Activated CD4-positive, alpha-beta memory T cell treated with anti-CD3 and anti-CD28 coated beads for 36 hours (primary cell): ENCODE measurements at regions of chr9 and their contacts with region 1.

Region 1: DNA sequence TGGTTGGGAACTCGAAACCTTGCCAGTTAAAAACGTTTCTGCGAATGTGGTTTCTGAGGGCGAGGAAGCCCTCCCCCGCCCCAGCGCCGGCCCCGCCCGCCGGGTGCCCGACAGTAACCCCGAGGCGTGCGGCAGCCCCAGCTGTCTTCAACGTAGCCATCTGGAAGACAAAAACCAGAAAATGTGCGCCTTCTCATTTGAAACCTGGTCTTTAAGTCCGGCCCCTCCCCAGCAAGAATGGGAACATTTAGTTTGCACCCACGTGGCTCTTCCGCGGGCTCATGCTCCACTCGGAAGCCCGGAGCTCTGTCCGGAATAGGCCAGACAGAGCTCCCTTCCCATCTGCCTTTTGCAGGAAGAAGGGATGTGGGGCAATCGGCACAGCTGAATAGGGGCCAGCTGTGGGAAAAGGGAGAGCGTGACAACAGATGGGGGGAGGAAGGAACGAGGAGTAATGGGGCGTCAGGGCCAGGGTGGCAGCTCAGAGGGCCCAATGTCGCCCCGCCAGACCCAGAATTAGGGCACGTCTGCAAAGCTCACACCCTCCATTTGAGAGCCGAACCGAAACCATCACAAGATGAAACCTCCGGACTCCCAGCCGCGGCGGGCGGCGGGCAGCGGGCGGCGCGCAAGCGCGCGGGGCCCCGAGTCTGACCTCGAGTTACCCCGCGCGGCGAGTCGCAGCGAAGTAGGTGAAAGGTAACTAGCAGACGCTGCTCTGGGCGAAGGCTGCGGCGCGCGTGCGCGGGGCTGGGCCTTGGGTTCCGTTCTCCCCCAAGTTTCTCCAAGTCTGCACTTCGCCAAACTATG is 63.4 kb upstream of the ABCA1 start:
- DNase-seq: peak; percentile 93
- H3K4me3 Mint-ChIP-seq: peak overlapping the region; percentile 79
- H3K27ac Mint-ChIP-seq: peak overlapping the region; percentile 92
- H3K4me1 Mint-ChIP-seq: peaks cover 35% of the 10 kb centered on the region
- H3K27me3 Mint-ChIP-seq: peaks cover 29% of the 10 kb centered on the region

Region 2: GRCh38 chr9:104747558-104748358 is 243.6 kb before region 1 on chr9 and contains the start of gene NIPSNAP3A:
- CTCF ChIA-PET with region 1: no interaction called
- POLR2A ChIA-PET with region 1: no interaction called
- intact Hi-C with region 1: loop called (anchors 5 kb)
- DNase-seq: peak; percentile 90
- H3K4me3 Mint-ChIP-seq: peak within 1 kb of the TSS; percentile 96
- H3K27ac Mint-ChIP-seq: peak within 1 kb of the TSS; percentile 89
- H3K4me1 Mint-ChIP-seq: peaks cover 14% of the 10 kb centered on the region
- H3K27me3 Mint-ChIP-seq: no peaks in the 10 kb centered on the region
- total RNA-seq, gene NIPSNAP3A: 11.1 to 12.5 TPM

Region 3: GRCh38 chr9:104927912-104928740 is 63.2 kb before region 1 on chr9 and contains the start of gene ABCA1:
- CTCF ChIA-PET with region 1: interaction called, 8 read pairs
- POLR2A ChIA-PET with region 1: interaction called, 10 read pairs
- intact Hi-C with region 1: loop called (anchors 1 kb)
- DNase-seq: peak; percentile 86
- H3K4me3 Mint-ChIP-seq: peak within 1 kb of the TSS; percentile 82
- H3K27ac Mint-ChIP-seq: peak within 1 kb of the TSS; percentile 49
- H3K4me1 Mint-ChIP-seq: peaks cover 9% of the 10 kb centered on the region
- H3K27me3 Mint-ChIP-seq: peaks cover 12% of the 10 kb centered on the region
- total RNA-seq, gene ABCA1: 6.1 TPM

Region 4: DNA sequence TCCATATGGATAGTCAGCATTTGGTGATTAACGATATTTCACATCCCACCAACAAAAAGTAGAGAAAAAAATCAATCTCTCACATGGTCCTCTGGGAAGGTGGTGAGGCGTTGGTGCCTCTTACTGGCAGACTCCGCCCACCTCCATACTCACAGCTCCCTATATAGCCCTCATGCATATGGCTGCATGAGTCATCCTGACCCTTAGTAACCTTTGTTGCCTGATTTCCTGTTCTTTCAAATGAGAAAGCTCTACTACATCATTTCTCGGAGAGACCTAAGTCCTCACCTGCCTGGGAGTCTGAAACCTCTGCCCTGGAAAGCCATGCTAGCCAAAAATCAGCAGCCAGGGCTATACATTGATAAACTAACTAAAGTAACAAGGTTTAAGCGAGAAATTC is 30.1 kb before region 1 on chr9:
- CTCF ChIA-PET with region 1: no interaction called
- POLR2A ChIA-PET with region 1: interaction called, 8 read pairs
- intact Hi-C with region 1: loop called (anchors 1 kb)
- DNase-seq: peak; percentile 83
- H3K4me3 Mint-ChIP-seq: no peak overlapping the region
- H3K27ac Mint-ChIP-seq: peak overlapping the region; percentile 85
- H3K4me1 Mint-ChIP-seq: peaks cover 31% of the 10 kb centered on the region
- H3K27me3 Mint-ChIP-seq: no peaks in the 10 kb centered on the region

Region 5: DNA sequence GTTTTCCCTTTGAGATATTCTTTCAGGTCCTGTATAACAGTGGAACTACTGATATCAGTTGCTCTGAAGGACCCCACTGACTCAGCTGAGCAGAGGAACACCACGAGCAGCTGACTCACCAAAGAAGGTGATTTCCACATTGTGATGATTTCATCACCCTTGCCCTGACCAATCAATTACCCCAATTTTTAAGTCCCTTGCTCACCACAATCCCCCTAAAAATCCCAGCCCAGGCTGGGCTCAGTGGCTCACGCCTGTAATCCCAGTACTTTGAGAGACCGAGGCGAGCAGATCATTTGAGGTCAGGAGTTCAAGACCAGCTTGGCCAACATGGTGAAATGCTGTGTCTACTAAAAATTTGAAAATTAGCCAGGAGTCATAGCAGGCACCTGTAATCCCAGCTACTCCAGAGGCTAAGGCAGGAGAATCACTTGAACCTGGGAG is 61.9 kb after region 1 on chr9:
- CTCF ChIA-PET with region 1: no interaction called
- POLR2A ChIA-PET with region 1: interaction called, 7 read pairs
- intact Hi-C with region 1: loop called (anchors 1 kb)
- DNase-seq: peak; percentile 83
- H3K4me3 Mint-ChIP-seq: no peak overlapping the region
- H3K27ac Mint-ChIP-seq: peak overlapping the region; percentile 43
- H3K4me1 Mint-ChIP-seq: peaks cover 36% of the 10 kb centered on the region
- H3K27me3 Mint-ChIP-seq: no peaks in the 10 kb centered on the region

Region 6: GRCh38 chr9:105157130-105157583 is 165.8 kb after region 1 on chr9:
- CTCF ChIA-PET with region 1: interaction called, 3 read pairs
- POLR2A ChIA-PET with region 1: no interaction called
- intact Hi-C with region 1: loop called (anchors 5 kb)
- DNase-seq: peak; percentile 27
- H3K4me3 Mint-ChIP-seq: no peak overlapping the region
- H3K27ac Mint-ChIP-seq: no peak overlapping the region
- H3K4me1 Mint-ChIP-seq: peaks cover 11% of the 10 kb centered on the region
- H3K27me3 Mint-ChIP-seq: no peaks in the 10 kb centered on the region

Region 7: DNA sequence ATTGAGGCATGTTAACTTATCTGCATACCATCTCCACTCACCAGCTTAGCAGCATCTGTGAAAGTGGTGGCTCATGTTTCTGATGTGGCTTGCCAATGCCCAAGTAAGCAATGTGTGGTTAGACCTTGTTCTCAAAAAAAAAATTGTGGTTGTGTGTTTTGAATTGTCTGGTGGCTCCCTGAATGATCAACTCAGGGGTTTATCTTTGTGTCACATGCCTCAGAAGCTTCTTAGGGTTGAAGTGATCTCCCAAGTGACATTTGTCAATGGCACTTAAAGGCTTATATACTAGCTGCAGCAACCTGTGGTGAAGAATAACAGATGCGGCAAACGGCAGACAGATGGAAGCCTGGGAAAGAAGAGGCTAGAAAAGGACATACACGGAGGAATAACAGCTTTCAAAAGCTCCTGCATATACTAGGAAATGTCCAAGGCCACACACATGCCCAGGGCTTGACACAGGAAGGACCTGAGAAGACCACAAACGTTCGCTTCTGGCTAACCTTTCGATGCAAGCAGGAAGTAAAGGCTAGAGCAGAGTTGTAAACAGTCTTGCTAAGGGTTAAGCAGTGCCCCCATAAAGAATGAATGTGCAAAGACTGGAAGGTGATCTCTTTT is 414.3 kb after region 1 on chr9:
- CTCF ChIA-PET with region 1: no interaction called
- POLR2A ChIA-PET with region 1: no interaction called
- intact Hi-C with region 1: loop called (anchors 10 kb)
- DNase-seq: peak; percentile 71
- H3K4me3 Mint-ChIP-seq: peak overlapping the region; percentile 7
- H3K27ac Mint-ChIP-seq: peak overlapping the region; percentile 43
- H3K4me1 Mint-ChIP-seq: peaks cover 25% of the 10 kb centered on the region
- H3K27me3 Mint-ChIP-seq: peaks cover 70% of the 10 kb centered on the region